ENCODE measurements at regions of chr11 and their contacts with region 1.

Region 1: DNA sequence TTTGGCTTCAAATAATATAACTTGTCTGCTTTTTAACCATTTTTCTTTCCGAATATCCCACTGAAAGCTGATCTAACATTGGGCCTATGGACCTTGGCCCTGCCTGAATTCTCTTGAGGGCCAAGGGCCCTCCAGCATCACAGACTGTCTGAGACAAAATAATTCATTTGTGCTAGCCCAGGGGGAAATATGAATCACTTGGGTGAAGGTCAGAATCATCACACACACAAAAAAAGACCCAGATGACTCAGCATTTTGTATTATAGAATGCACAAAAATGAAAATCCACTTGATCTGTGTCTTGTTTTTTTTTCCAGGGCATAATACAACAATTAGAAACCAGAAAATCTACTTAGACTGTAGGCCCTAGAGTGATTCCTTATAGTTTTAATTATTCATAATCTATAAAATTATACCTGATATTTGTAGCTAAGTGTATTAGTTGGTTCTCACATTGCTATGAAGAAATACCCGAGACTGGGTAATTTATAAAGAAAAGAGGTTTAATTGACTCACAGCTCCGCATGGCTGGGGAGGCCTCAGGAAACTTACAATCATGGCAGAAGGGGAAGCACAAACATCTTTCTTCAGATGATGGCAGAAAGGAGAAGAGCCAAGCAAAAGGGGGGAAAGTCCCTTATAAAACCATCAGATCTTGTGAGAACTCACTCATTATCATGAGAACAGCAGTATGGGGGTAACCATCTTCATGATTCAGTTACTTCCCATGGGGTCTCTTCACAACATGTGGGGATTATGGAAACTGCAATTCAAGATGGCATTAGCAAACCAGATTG is 15.6 kb upstream of the RDX start:
- DNase-seq: no peak
- ATAC-seq: peak; percentile 93
- H3K4me3 ChIP-seq: no peak overlapping the region
- H3K27ac ChIP-seq: peak overlapping the region; percentile 33; the same call in 1 of the 2 replicates
- H3K4me1 ChIP-seq: peaks cover 3% of the 10 kb centered on the region; the same call in 1 of the 2 replicates
- H3K27me3 ChIP-seq: no peaks in the 10 kb centered on the region
- CTCF ChIP-seq: no peak
- EP300 ChIP-seq: no peak
- POLR2A ChIP-seq: no peak
- RAD21 ChIP-seq: no peak

Region 2: GRCh38 chr11:110098645-110099044 is 213.3 kb before region 1 on chr11:
- CTCF ChIA-PET with region 1: no interaction called
- POLR2A ChIA-PET with region 1: no interaction called
- RAD21 ChIA-PET with region 1: no interaction called
- SMC1A ChIA-PET with region 1: no interaction called
- in situ Hi-C with region 1: no loop called
- intact Hi-C with region 1: no loop called
- DNase-seq: no peak
- ATAC-seq: peak; percentile 78
- H3K4me3 ChIP-seq: no peak overlapping the region
- H3K27ac ChIP-seq: no peak overlapping the region
- H3K4me1 ChIP-seq: peaks cover 11% of the 10 kb centered on the region; the same call in 1 of the 2 replicates
- H3K27me3 ChIP-seq: no peaks in the 10 kb centered on the region
- CTCF ChIP-seq: peak; percentile 23 to 41 (median 25); a peak in 3 of 6 replicates
- EP300 ChIP-seq: peak in 1 of 2 experiments; percentile 30; a peak in 1 of 4 replicates
- POLR2A ChIP-seq: no peak
- RAD21 ChIP-seq: peak; percentile 57

Region 3: GRCh38 chr11:110327508-110327907 is 15.5 kb after region 1 on chr11:
- CTCF ChIA-PET with region 1: interaction called, 5 read pairs
- POLR2A ChIA-PET with region 1: no interaction called
- RAD21 ChIA-PET with region 1: interaction called, 9 read pairs
- SMC1A ChIA-PET with region 1: interaction called, 11 read pairs
- in situ Hi-C with region 1: no loop called
- intact Hi-C with region 1: no loop called
- DNase-seq: no peak
- ATAC-seq: peak; percentile 41
- H3K4me3 ChIP-seq: peak overlapping the region; percentile 64
- H3K27ac ChIP-seq: peak overlapping the region; percentile 28; the same call in 1 of the 2 replicates
- H3K4me1 ChIP-seq: peaks cover 8% of the 10 kb centered on the region; the same call in 1 of the 2 replicates
- H3K27me3 ChIP-seq: no peaks in the 10 kb centered on the region
- CTCF ChIP-seq: no peak
- EP300 ChIP-seq: no peak
- POLR2A ChIP-seq: no peak
- RAD21 ChIP-seq: no peak